ENCODE measurements at regions of chr4 and their contacts with region 1.

Region 1: GRCh38 chr4:16916719-16917337 is 18.4 kb upstream of the LDB2 start:
- DNase-seq: peak; percentile 90 to 94
- H3K4me3 ChIP-seq: no peak overlapping the region
- H3K27ac ChIP-seq: no peak overlapping the region
- H3K4me1 ChIP-seq: peaks cover 0 to 10% (median 4%) of the 10 kb centered on the region in 4 experiments; a peak in 6 of 7 replicates
- H3K27me3 ChIP-seq: no peaks in the 10 kb centered on the region
- CTCF ChIP-seq: peak; percentile 93 to 99 (median 97)
- EP300 ChIP-seq: 0 out of 3 replicates have a peak, but pooled peaks of 1 of the 2 experiments have one; percentile 53
- POLR2A ChIP-seq: no peak
- RAD21 ChIP-seq: peak; percentile 87 to 94

Region 2: GRCh38 chr4:16360701-16361262 is 556.0 kb before region 1 on chr4:
- CTCF ChIA-PET with region 1: no interaction called
- POLR2A ChIA-PET with region 1: no interaction called
- DNase-seq: no peak
- H3K4me3 ChIP-seq: no peak overlapping the region
- H3K27ac ChIP-seq: no peak overlapping the region
- H3K4me1 ChIP-seq: peaks cover 0 to 2% (median 0%) of the 10 kb centered on the region in 4 experiments; a peak in 1 of 7 replicates
- H3K27me3 ChIP-seq: no peaks in the 10 kb centered on the region; a peak in 1 of 7 replicates
- CTCF ChIP-seq: no peak
- EP300 ChIP-seq: no peak
- POLR2A ChIP-seq: no peak
- RAD21 ChIP-seq: no peak

Region 3: DNA sequence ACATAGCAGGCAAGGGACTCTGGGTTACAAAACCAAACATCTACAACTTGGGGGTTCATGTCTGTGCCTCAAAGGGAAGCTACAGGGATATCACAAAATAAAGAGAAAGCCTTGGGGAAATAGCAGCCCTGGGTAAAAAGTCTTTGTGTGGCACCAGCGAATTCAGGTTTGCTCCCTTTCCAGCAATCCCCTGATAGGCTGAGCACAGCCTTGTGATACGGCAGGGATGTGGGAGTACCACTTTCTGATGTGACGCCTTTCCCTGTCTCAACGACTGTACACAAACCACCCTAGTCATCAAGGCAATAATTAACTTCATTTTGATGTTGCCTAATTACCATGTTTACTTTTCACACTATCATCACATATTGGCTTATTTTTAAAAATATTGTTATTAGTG is 183.3 kb before region 1 on chr4:
- CTCF ChIA-PET with region 1: no interaction called
- POLR2A ChIA-PET with region 1: no interaction called
- DNase-seq: no peak
- H3K4me3 ChIP-seq: no peak overlapping the region
- H3K27ac ChIP-seq: no peak overlapping the region
- H3K4me1 ChIP-seq: peaks cover 4 to 13% (median 12%) of the 10 kb centered on the region in 4 experiments; a peak in 6 of 7 replicates
- H3K27me3 ChIP-seq: no peaks in the 10 kb centered on the region
- CTCF ChIP-seq: no peak
- EP300 ChIP-seq: no peak
- POLR2A ChIP-seq: no peak
- RAD21 ChIP-seq: no peak

Region 4: GRCh38 chr4:16764622-16765021 is 152.2 kb before region 1 on chr4:
- CTCF ChIA-PET with region 1: interaction called, 17 read pairs
- POLR2A ChIA-PET with region 1: no interaction called
- DNase-seq: peak in 1 of 2 experiments; percentile 54
- H3K4me3 ChIP-seq: no peak overlapping the region
- H3K27ac ChIP-seq: no peak overlapping the region
- H3K4me1 ChIP-seq: peaks cover 0 to 9% (median 1%) of the 10 kb centered on the region in 4 experiments; a peak in 2 of 7 replicates
- H3K27me3 ChIP-seq: no peaks in the 10 kb centered on the region
- CTCF ChIP-seq: peak; percentile 64 to 81 (median 73)
- EP300 ChIP-seq: no peak
- POLR2A ChIP-seq: no peak
- RAD21 ChIP-seq: peak; percentile 85 to 90

Region 5: GRCh38 chr4:16807355-16807754 is 109.5 kb before region 1 on chr4:
- CTCF ChIA-PET with region 1: interaction called, 11 read pairs
- POLR2A ChIA-PET with region 1: no interaction called
- DNase-seq: no peak
- H3K4me3 ChIP-seq: no peak overlapping the region
- H3K27ac ChIP-seq: no peak overlapping the region
- H3K4me1 ChIP-seq: no peaks in the 10 kb centered on the region
- H3K27me3 ChIP-seq: no peaks in the 10 kb centered on the region
- CTCF ChIP-seq: no peak
- EP300 ChIP-seq: no peak
- POLR2A ChIP-seq: no peak
- RAD21 ChIP-seq: no peak

Region 6: DNA sequence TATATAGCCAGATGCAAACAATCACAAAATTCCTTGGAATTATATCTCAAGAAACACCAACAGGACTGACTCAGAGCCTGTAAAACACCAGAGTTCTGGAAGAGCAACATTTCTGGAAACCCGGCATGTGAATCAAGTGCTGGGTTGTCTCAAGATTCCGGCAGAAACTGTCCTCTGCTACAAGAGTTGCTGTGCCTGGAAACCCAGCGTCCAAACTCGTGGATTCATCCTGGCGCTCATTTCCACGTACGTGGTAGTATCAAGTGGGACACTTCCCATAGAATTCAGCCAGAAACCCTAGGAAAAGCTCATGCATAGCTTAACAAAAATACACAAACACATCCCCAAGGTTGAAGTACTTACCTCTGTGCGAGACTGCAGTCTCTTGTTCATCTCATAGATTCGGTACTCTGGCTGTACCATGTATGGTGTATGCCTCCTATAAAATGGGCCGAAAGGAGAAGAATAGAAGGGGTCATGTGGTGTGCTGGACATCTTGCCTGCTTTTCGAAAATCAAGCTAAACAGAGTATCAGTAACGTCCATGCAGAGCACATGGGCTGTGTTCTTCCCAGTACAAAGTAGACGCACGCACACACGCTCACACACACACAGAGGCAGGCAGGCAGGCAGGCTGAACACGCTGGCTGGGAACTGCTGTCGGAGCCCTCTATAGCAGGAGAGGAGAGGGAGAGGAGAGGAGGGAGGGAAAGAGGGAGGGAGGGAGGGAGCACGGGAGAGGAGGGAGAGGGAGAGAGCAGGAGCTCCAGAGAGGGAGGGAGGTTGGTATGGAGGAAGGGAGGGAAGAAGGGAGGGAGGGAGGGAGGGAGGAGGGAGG is 18.6 kb before region 1 on chr4 and contains the start of gene LDB2:
- CTCF ChIA-PET with region 1: interaction called, 35 read pairs
- POLR2A ChIA-PET with region 1: interaction called, 3 read pairs
- DNase-seq: peak; percentile 54 to 64
- H3K4me3 ChIP-seq: peak within 1 kb of the TSS; percentile 60 to 80 (median 78)
- H3K27ac ChIP-seq: peak within 1 kb of the TSS; percentile 35; the same call in 1 of the 2 replicates
- H3K4me1 ChIP-seq: peaks cover 0 to 16% (median 13%) of the 10 kb centered on the region in 4 experiments; a peak in 5 of 7 replicates
- H3K27me3 ChIP-seq: no peaks in the 10 kb centered on the region
- CTCF ChIP-seq: no peak
- EP300 ChIP-seq: no peak
- POLR2A ChIP-seq: peak in 1 of 2 experiments; percentile 51; a peak in 1 of 3 replicates
- RAD21 ChIP-seq: peak in 1 of 2 experiments; percentile 18; a peak in 1 of 4 replicates
- total RNA-seq, gene LDB2: 42.7 and 57.0 TPM in 2 replicates

Region 7: GRCh38 chr4:16959305-16959704 is 42.5 kb after region 1 on chr4:
- CTCF ChIA-PET with region 1: interaction called, 12 read pairs
- POLR2A ChIA-PET with region 1: no interaction called
- DNase-seq: no peak
- H3K4me3 ChIP-seq: no peak overlapping the region
- H3K27ac ChIP-seq: no peak overlapping the region
- H3K4me1 ChIP-seq: peaks cover 0 to 7% (median 3%) of the 10 kb centered on the region in 4 experiments; a peak in 3 of 7 replicates
- H3K27me3 ChIP-seq: no peaks in the 10 kb centered on the region
- CTCF ChIP-seq: no peak
- EP300 ChIP-seq: no peak
- POLR2A ChIP-seq: no peak
- RAD21 ChIP-seq: no peak

Region 8: DNA sequence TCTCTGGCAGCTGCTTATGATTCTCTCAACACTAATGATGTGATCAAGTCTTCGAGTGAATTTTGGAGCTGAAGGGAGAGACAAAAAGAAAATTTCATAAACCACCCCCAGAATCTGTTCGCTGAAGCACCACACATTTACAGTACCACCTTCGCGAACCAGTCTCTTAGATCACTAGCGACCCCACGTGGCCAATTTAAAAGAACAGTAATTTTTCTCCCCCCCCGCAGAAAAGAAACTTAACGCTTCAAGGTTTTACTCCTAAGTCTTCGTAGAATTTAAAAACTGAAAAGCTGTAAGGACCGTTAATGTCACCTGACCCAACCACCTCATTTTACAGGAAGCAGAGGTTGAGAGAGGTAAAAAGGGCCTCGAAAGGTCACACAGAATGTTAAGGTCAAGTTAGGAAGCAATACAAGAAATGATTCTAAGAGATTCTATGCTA is 407.6 kb after region 1 on chr4:
- CTCF ChIA-PET with region 1: interaction called, 27 read pairs
- POLR2A ChIA-PET with region 1: no interaction called
- DNase-seq: peak in 1 of 2 experiments; percentile 72
- H3K4me3 ChIP-seq: no peak overlapping the region
- H3K27ac ChIP-seq: no peak overlapping the region
- H3K4me1 ChIP-seq: peaks cover 0 to 7% (median 3%) of the 10 kb centered on the region in 4 experiments; a peak in 1 of 7 replicates
- H3K27me3 ChIP-seq: 0 out of 7 replicates have a peak, but pooled peaks cover 0 to 3% (median 0%) of the 10 kb centered on the region in 4 experiments
- CTCF ChIP-seq: peak in 2 of 3 experiments; percentile 46 to 67; a peak in 3 of 4 replicates
- EP300 ChIP-seq: no peak
- POLR2A ChIP-seq: no peak
- RAD21 ChIP-seq: peak; percentile 91

Measured in H1 (cell line).